CD8-positive, alpha-beta T cell (primary cell): ENCODE measurements at regions of chr20 and their contacts with region 1.

Region 1: DNA sequence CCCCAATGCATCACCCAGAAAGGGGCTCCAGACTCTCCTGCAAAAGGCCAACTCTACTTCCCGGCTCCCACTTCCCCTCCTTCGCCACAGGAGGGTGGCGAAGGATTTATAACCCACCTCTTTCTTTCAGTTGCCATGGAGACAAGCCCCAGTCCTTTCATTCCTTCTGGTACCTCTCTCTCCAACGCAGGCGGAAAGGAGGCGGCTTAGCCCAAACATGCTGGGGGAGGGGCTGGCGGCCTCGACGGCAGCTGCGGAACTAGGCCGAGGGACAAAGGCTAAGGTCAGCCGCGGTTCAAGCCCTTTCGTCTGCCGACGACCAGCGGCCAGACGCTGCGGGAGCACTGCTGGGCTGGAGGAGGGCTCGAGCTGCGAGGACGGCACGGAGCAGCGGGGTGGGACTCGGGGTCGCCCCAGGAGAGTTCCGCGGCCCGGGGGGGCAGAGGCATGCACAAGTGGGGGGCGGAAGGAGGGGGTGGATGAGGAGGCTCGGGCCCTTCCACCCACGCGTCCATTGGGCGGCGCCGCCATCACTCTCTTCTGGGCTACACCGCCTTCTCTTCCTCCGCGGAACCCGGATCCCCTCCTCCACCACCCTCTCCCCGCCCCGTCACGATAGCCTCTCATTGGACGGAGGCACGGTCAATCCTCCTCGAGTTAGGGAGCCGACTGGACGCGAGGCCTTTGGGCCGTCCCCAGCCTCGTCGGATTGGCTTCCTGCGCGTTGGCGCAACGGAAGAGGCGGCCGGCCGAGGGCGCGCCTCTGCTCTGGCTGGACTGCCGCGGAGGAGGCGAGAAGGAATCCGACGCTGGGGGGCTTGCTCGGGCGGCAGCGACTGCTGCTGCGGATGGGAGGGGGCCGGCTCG is at the start of gene PANK2:
- DNase-seq: peak; percentile 95 to 99 (median 97)
- ATAC-seq: peak; percentile 95
- H3K4me3 ChIP-seq: peak within 1 kb of the TSS; percentile 83 to 97
- H3K4me3 Mint-ChIP-seq: peak within 1 kb of the TSS; percentile 97
- H3K27ac ChIP-seq: peak within 1 kb of the TSS; percentile 72 to 81
- H3K27ac Mint-ChIP-seq: peak within 1 kb of the TSS; percentile 96
- H3K4me1 ChIP-seq: peaks cover 37% of the 10 kb centered on the region
- H3K4me1 Mint-ChIP-seq: peaks cover 57% of the 10 kb centered on the region
- H3K27me3 ChIP-seq: no peaks in the 10 kb centered on the region
- H3K27me3 Mint-ChIP-seq: no peaks in the 10 kb centered on the region
- CTCF ChIP-seq: no peak
- total RNA-seq, gene PANK2: 44.2 to 53.5 TPM

Region 2: GRCh38 chr20:3811467-3812258 is 77.2 kb before region 1 on chr20:
- CTCF ChIA-PET with region 1: no interaction called
- POLR2A ChIA-PET with region 1: interaction called, 3 read pairs
- intact Hi-C with region 1: loop called in 1 of 2 experiments (anchors 2 kb)
- DNase-seq: peak; percentile 79 to 98 (median 95)
- ATAC-seq: peak; percentile 90
- H3K4me3 ChIP-seq: peak overlapping the region; percentile 49 to 72
- H3K4me3 Mint-ChIP-seq: peak overlapping the region; percentile 85
- H3K27ac ChIP-seq: peak overlapping the region; percentile 79 to 90
- H3K27ac Mint-ChIP-seq: peak overlapping the region; percentile 99
- H3K4me1 ChIP-seq: peaks cover 85% of the 10 kb centered on the region
- H3K4me1 Mint-ChIP-seq: peaks cover 73% of the 10 kb centered on the region
- H3K27me3 ChIP-seq: no peaks in the 10 kb centered on the region
- H3K27me3 Mint-ChIP-seq: no peaks in the 10 kb centered on the region
- CTCF ChIP-seq: no peak

Region 3: GRCh38 chr20:3846740-3847428 is 42.0 kb before region 1 on chr20 and contains the start of gene MAVS:
- CTCF ChIA-PET with region 1: no interaction called
- POLR2A ChIA-PET with region 1: no interaction called
- intact Hi-C with region 1: loop called (anchors 2 to 10 kb)
- DNase-seq: peak; percentile 67 to 92 (median 85)
- ATAC-seq: peak; percentile 97
- H3K4me3 ChIP-seq: peak within 1 kb of the TSS; percentile 76 to 87
- H3K4me3 Mint-ChIP-seq: peak within 1 kb of the TSS; percentile 87
- H3K27ac ChIP-seq: peak within 1 kb of the TSS; percentile 60 to 79
- H3K27ac Mint-ChIP-seq: peak within 1 kb of the TSS; percentile 82
- H3K4me1 ChIP-seq: peaks cover 10% of the 10 kb centered on the region
- H3K4me1 Mint-ChIP-seq: peaks cover 33% of the 10 kb centered on the region
- H3K27me3 ChIP-seq: no peaks in the 10 kb centered on the region
- H3K27me3 Mint-ChIP-seq: no peaks in the 10 kb centered on the region
- CTCF ChIP-seq: no peak
- total RNA-seq, gene MAVS: 10.0 to 10.5 TPM

Region 4: GRCh38 chr20:3927486-3928291 is 38.8 kb after region 1 on chr20:
- CTCF ChIA-PET with region 1: interaction called, 3 read pairs
- POLR2A ChIA-PET with region 1: interaction called, 4 read pairs
- intact Hi-C with region 1: loop called in 1 of 2 experiments (anchors 5 kb)
- DNase-seq: no peak
- ATAC-seq: no peak
- H3K4me3 ChIP-seq: no peak overlapping the region
- H3K4me3 Mint-ChIP-seq: no peak overlapping the region
- H3K27ac ChIP-seq: peak overlapping the region in 1 of 2 experiments; percentile 2
- H3K27ac Mint-ChIP-seq: peak overlapping the region; percentile 20
- H3K4me1 ChIP-seq: peaks cover 12% of the 10 kb centered on the region
- H3K4me1 Mint-ChIP-seq: peaks cover 55% of the 10 kb centered on the region
- H3K27me3 ChIP-seq: no peaks in the 10 kb centered on the region
- H3K27me3 Mint-ChIP-seq: no peaks in the 10 kb centered on the region
- CTCF ChIP-seq: no peak

Region 5: GRCh38 chr20:4014031-4014474 is 125.2 kb after region 1 on chr20:
- CTCF ChIA-PET with region 1: no interaction called
- POLR2A ChIA-PET with region 1: interaction called, 3 read pairs
- intact Hi-C with region 1: loop called (anchors 1 kb)
- DNase-seq: peak in 5 of 9 experiments; percentile 19 to 65 (median 34)
- ATAC-seq: no peak
- H3K4me3 ChIP-seq: peak overlapping the region in 1 of 2 experiments; percentile 3
- H3K4me3 Mint-ChIP-seq: peak overlapping the region; percentile 88
- H3K27ac ChIP-seq: peak overlapping the region in 1 of 2 experiments; percentile 23
- H3K27ac Mint-ChIP-seq: peak overlapping the region; percentile 4
- H3K4me1 ChIP-seq: peaks cover 17% of the 10 kb centered on the region
- H3K4me1 Mint-ChIP-seq: peaks cover 34% of the 10 kb centered on the region
- H3K27me3 ChIP-seq: no peaks in the 10 kb centered on the region
- H3K27me3 Mint-ChIP-seq: no peaks in the 10 kb centered on the region
- CTCF ChIP-seq: peak; percentile 35

Region 6: GRCh38 chr20:4082406-4083097 is 193.7 kb after region 1 on chr20:
- CTCF ChIA-PET with region 1: interaction called, 11 read pairs
- POLR2A ChIA-PET with region 1: interaction called, 3 read pairs
- intact Hi-C with region 1: loop called (anchors 1 kb)
- DNase-seq: peak; percentile 16 to 77 (median 47)
- ATAC-seq: peak; percentile 70
- H3K4me3 ChIP-seq: peak overlapping the region in 1 of 2 experiments; percentile 26
- H3K4me3 Mint-ChIP-seq: peak overlapping the region; percentile 32
- H3K27ac ChIP-seq: peak overlapping the region in 1 of 2 experiments; percentile 75
- H3K27ac Mint-ChIP-seq: peak overlapping the region; percentile 82
- H3K4me1 ChIP-seq: peaks cover 12% of the 10 kb centered on the region
- H3K4me1 Mint-ChIP-seq: peaks cover 39% of the 10 kb centered on the region
- H3K27me3 ChIP-seq: no peaks in the 10 kb centered on the region
- H3K27me3 Mint-ChIP-seq: no peaks in the 10 kb centered on the region
- CTCF ChIP-seq: no peak